Ovary (tissue), 10 donors: ENCODE measurements at regions of chr7 and their contacts with region 1.

Region 1: DNA sequence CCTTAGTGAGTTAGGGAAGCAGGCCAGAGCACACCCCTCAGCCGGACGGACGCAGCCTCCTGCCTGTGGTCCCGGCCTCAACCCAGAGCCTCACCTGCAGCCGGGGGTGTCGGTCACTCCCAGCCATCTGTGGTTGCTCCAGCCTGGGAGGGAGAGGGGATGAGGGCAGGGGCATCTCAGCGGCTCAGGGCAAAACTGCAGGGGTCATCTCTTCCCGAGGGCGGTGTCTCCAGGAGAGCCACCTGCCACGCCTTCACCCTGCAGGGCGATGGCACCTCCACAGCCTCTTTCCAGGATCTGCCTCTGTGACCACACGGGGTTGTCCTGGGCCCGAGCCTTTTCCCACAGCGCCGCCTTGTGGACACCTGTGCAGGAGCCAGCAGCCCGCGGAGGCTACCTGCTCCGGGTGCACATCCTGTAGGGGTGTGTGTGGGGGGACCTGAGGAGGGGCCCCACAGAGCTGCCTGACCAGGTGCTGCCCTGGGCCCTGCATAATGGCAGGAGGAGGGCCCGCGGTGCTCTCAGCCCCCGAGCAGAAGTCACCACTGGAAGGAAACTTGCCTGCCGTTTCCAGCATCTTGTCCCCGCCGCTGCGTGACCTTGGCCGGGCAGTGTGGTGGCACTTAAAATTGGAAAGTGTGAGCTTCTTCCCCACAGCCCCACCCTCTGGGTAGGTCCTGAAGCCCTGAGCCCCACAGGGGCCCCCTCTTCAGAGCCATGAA is 21.6 kb upstream of the AP5Z1 start:
- DNase-seq: peak; percentile 72 to 87 (median 81)
- H3K4me3 ChIP-seq: no peak overlapping the region
- H3K27ac ChIP-seq: no peak overlapping the region
- H3K4me1 ChIP-seq: no peaks in the 10 kb centered on the region
- H3K27me3 ChIP-seq: no peaks in the 10 kb centered on the region
- CTCF ChIP-seq: peak; percentile 79 to 86 (median 79)
- EP300 ChIP-seq: no peak
- POLR2A ChIP-seq: no peak

Region 2: DNA sequence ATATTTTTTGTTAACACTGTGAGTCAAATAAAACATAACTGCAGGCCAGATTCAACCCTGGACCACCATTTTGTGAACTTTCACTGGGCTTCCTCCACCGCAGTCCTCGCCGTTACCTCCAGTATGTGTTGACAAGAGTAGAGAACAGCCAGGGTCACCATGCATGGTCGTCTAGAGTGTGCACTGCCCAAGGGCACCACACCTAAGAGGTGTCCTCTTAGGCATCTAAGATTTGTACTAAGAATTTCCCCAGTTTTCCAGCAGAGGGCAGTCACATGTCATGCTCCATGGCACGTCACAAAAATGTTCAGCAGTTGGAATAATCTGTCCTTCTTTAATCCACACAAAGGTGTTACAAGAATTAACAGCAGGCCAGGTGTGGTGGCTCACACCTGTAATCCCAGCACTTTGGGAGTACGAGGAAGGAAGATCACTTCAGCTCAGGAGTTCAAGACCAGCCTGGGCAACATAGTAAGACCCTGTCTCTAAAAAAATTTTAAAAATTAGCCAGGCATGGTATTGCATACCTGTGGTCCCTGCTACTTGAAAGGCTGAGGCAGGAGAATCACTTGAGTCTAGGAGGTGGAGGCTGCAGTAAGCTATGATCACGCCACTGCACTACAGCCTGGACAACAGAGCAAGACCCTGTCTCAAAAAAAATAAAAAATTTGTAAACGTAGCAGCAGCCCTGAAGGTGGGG is 143.0 kb before region 1 on chr7:
- intact Hi-C with region 1: loop called in 3 of 4 experiments (anchors 5 to 10 kb)
- DNase-seq: peak; percentile 23 to 67 (median 42)
- H3K4me3 ChIP-seq: no peak overlapping the region
- H3K27ac ChIP-seq: no peak overlapping the region
- H3K4me1 ChIP-seq: peaks cover 1% of the 10 kb centered on the region
- H3K27me3 ChIP-seq: no peaks in the 10 kb centered on the region
- CTCF ChIP-seq: peak; percentile 70 to 81 (median 76)
- EP300 ChIP-seq: no peak
- POLR2A ChIP-seq: no peak

Region 3: DNA sequence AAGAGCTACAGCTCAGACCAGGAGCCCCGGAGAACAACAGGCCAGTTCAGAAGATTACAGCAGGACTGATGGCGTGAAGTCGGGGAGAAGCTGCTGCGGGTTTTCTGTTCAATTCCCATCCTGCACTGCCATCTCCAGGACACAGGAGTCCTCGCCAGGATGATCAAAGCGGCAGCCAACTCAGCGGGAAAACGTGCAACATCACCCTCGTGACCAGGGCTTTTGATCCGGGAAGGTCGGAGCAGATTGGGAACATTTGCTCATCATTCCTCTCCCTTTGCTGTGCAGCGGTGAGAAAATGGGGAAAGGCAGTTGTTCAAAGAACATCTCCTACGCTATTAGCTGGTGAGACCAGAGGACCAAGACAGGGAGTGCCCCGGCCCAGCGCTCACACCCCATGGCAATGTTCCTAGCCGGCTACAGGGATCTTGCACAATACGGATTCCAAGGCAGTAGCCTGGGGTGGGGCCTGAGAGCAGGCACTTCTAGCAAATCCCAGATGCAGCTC is 122.2 kb before region 1 on chr7:
- intact Hi-C with region 1: loop called in 1 of 4 experiments (anchors 5 kb)
- DNase-seq: peak; percentile 81 to 88 (median 84)
- H3K4me3 ChIP-seq: peak overlapping the region; percentile 16
- H3K27ac ChIP-seq: peak overlapping the region in 1 of 2 donors; percentile 28
- H3K4me1 ChIP-seq: no peaks in the 10 kb centered on the region
- H3K27me3 ChIP-seq: no peaks in the 10 kb centered on the region
- CTCF ChIP-seq: peak; percentile 43 to 77 (median 71)
- EP300 ChIP-seq: peak; percentile 62
- POLR2A ChIP-seq: no peak

Region 4: DNA sequence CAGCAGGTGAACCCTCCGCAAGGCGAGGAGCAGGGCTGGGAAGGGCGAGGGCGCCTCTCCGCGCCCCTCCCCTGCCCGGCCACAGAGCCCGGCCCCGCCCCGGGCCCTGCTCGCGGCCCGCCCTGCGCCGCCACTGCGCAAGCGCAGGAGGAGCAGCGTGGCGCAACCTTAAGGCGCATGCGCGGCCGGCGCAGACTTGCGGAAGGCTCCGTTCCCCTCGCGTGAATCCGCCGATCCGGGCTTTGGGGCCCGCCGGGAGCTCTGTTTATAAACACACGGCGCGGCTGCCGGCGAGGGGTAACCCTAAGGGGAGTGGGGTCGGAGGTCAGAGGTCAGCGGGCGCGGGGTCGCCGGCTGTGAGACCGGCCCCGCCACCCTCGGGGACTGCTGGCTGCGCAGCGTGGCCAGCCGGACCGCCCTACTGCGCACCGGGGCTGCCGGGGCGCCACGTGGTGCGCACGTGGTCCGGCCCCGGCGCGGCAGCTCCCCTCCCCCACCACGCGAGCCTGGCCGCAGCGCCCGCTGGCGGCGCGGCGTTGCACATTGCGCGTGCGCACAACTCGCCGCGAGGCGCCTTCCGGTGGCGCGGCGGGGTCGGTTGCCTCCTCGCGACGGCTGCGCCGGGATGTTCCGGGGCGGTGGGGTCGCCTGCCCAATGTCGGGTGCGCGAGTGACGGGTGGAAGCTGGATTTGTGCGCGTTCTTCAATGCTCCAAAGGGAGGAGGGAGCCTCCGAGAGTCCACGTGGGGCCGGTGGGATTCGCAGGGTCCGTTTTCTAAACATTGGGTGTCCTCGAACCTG is 112.0 kb before region 1 on chr7:
- intact Hi-C with region 1: loop called in 1 of 4 experiments (anchors 5 kb)
- DNase-seq: peak; percentile 93 to 99 (median 97)
- H3K4me3 ChIP-seq: peak overlapping the region; percentile 74
- H3K27ac ChIP-seq: peak overlapping the region; percentile 86 to 87
- H3K4me1 ChIP-seq: peaks cover 1% of the 10 kb centered on the region
- H3K27me3 ChIP-seq: no peaks in the 10 kb centered on the region
- CTCF ChIP-seq: peak in 2 of 3 donors; percentile 87 to 89
- EP300 ChIP-seq: no peak
- POLR2A ChIP-seq: peak; percentile 56